Activated naive CD4-positive, alpha-beta T cell treated with anti-CD3 and anti-CD28 coated beads, Interleukin-2, amount 10 ng/mL, durations not matched to agents 7 days and 5 days (primary cell): ENCODE measurements at regions of chr3 and their contacts with region 1.

Region 1: DNA sequence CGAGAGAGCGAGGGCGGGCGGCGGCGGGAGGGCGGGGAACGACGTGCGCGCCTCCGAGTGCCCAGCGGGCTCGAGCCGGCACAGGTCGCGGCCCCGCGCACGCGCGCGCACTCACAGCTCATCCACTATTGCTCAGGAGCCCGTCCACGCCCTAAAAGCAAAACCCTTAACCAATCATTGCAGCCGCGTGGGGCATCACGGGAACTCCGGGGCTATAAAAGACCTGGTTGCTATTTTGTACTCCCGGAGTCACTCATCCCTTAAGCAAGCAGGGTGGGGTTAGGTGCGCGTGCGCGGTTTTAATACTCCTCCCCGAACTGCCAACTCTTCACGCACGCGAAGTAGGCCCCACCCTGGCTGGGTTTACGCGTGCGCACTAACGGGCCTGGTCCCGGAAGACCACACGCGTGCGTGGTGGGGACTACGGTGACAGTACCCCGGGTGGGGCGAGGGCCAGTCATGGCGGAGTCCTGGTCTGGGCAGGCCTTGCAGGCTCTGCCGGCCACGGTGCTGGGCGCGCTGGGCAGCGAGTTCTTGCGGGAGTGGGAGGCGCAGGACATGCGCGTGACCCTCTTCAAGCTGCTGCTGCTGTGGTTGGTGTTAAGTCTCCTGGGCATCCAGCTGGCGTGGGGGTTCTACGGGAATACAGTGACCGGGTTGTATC is at the starts of genes RHOA and TCTA:
- DNase-seq: peak; percentile 99
- H3K4me3 Mint-ChIP-seq: peak within 1 kb of the TSS; percentile 98
- H3K27ac Mint-ChIP-seq: peak within 1 kb of the TSS; percentile 95
- H3K4me1 Mint-ChIP-seq: peaks cover 73% of the 10 kb centered on the region
- H3K27me3 Mint-ChIP-seq: no peaks in the 10 kb centered on the region

Region 2: GRCh38 chr3:49445381-49445780 is 33.3 kb after region 1 on chr3:
- CTCF ChIA-PET with region 1: interaction called, 72 read pairs
- DNase-seq: no peak
- H3K4me3 Mint-ChIP-seq: no peak overlapping the region
- H3K27ac Mint-ChIP-seq: no peak overlapping the region
- H3K4me1 Mint-ChIP-seq: peaks cover 25% of the 10 kb centered on the region
- H3K27me3 Mint-ChIP-seq: no peaks in the 10 kb centered on the region